Breast epithelium (tissue), 4 donors: ENCODE measurements at regions of chr2 and their contacts with region 1.

Region 1: DNA sequence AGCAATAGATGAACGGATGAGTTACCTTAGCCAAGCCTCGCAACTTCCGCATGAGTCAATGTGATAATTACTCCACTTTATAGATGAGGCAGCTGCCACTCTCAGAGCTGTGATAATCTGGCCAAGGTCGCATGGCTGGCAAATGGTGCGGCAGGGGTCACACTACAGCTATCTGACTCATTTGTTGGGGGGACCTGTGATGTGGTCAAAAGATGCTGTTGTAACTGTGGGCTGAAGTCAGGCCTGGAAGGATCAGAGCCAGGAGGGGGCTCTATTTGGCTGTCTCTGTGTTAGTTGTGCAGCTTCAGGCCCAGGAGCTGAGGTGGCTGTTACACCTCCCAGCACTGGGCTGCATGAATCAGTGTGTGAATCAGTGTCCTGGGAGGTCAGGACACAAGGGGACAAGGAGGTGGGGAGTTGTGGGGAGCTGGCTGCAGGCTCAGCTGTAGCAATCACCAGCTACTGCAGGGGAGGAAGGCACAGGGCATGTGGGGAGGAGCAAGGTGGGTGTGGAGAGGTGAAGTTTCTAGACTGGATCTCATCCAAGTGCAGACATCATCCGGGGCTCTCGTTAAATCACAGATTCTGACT is 33.1 kb downstream of the NGEF start:
- DNase-seq: peak in 1 of 2 donors; percentile 35
- H3K4me3 ChIP-seq: no peak overlapping the region
- H3K27ac ChIP-seq: no peak overlapping the region
- H3K4me1 ChIP-seq: peaks cover 0 to 5% of the 10 kb centered on the region in 2 donors
- H3K27me3 ChIP-seq: no peaks in the 10 kb centered on the region
- CTCF ChIP-seq: no peak
- POLR2A ChIP-seq: no peak

Region 2: GRCh38 chr2:231795291-231796040 is 1184.5 kb before region 1 on chr2:
- intact Hi-C with region 1: no loop called
- DNase-seq: peak; percentile 21 to 62
- H3K4me3 ChIP-seq: no peak overlapping the region
- H3K27ac ChIP-seq: no peak overlapping the region
- H3K4me1 ChIP-seq: no peaks in the 10 kb centered on the region
- H3K27me3 ChIP-seq: no peaks in the 10 kb centered on the region
- CTCF ChIP-seq: peak in 2 of 3 donors; percentile 30 to 31
- POLR2A ChIP-seq: no peak

Region 3: DNA sequence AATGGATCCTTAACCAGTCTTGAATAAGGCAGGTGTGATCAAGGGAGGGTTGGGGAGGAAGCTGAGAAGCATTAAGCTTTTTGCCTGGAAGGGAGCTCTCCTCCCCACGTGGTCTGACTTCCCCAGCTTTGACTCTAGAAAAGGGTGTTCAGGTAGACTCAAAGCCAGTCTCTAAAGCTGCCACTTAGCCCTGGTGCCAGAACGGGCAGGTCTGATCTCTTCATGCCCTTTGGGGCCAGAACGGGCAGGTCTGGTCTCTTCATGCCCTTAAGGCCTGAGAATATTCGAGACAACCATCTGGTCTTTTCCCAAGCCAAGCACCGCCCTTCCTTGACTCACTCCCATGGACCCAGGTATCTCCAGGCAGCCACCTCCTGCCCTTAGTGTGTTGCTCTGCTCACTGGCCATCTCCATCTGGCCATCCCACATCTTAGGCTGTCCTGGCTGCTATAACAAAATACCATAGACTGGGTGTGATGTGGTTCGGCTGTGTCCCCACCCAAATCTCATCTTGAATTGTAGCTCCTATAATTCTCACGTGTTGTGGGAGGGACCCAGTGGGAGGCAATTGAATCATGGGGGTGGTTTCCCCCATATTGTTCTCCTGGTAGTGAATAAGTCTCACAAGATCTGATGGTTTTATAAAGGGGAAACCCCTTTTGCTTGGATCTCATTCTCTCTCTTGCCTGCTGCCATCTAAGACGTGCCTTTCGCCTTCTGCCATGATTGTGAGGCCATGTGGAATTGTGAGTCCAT is 50.5 kb before region 1 on chr2:
- intact Hi-C with region 1: loop called (anchors 2 kb)
- DNase-seq: no peak
- H3K4me3 ChIP-seq: no peak overlapping the region
- H3K27ac ChIP-seq: no peak overlapping the region
- H3K4me1 ChIP-seq: peaks cover 0 to 5% of the 10 kb centered on the region in 2 donors
- H3K27me3 ChIP-seq: peaks cover 0 to 35% of the 10 kb centered on the region in 2 donors
- CTCF ChIP-seq: no peak
- POLR2A ChIP-seq: no peak